ENCODE measurements at regions of chr7 and their contacts with region 1.

Region 1: GRCh38 chr7:140673063-140673773 is 473 bp downstream of the ADCK2 start:
- DNase-seq: peak in 1 of 2 donors; percentile 67
- H3K4me3 ChIP-seq: peak overlapping the region; percentile 95 to 99
- H3K27ac ChIP-seq: peak overlapping the region; percentile 83 to 87
- H3K4me1 ChIP-seq: peaks cover 0 to 15% of the 10 kb centered on the region in 2 donors
- H3K27me3 ChIP-seq: no peaks in the 10 kb centered on the region
- CTCF ChIP-seq: no peak

Region 2: GRCh38 chr7:140397784-140398750 is 275.2 kb before region 1 on chr7 and contains the start of gene SLC37A3:
- intact Hi-C with region 1: loop called (anchors 5 kb)
- DNase-seq: peak; percentile 37 to 89
- H3K4me3 ChIP-seq: peak within 1 kb of the TSS; percentile 81
- H3K27ac ChIP-seq: peak within 1 kb of the TSS; percentile 76 to 83
- H3K4me1 ChIP-seq: peaks cover 0 to 3% of the 10 kb centered on the region in 2 donors
- H3K27me3 ChIP-seq: no peaks in the 10 kb centered on the region
- CTCF ChIP-seq: peak in 1 of 3 experiments; percentile 29
- total RNA-seq, gene SLC37A3: 15.0 TPM

Region 3: GRCh38 chr7:140696680-140697446 is 23.6 kb after region 1 on chr7 and contains the start of gene NDUFB2:
- intact Hi-C with region 1: loop called (anchors 1 kb)
- DNase-seq: peak in 1 of 2 donors; percentile 77
- H3K4me3 ChIP-seq: peak within 1 kb of the TSS; percentile 62 to 74
- H3K27ac ChIP-seq: peak within 1 kb of the TSS; percentile 80 to 89
- H3K4me1 ChIP-seq: peaks cover 0 to 13% of the 10 kb centered on the region in 2 donors
- H3K27me3 ChIP-seq: no peaks in the 10 kb centered on the region
- CTCF ChIP-seq: no peak
- total RNA-seq, gene NDUFB2: 35.9 TPM

Region 4: GRCh38 chr7:140726281-140726680 is 53.1 kb after region 1 on chr7:
- intact Hi-C with region 1: no loop called
- DNase-seq: no peak
- H3K4me3 ChIP-seq: no peak overlapping the region
- H3K27ac ChIP-seq: no peak overlapping the region
- H3K4me1 ChIP-seq: no peaks in the 10 kb centered on the region
- H3K27me3 ChIP-seq: no peaks in the 10 kb centered on the region
- CTCF ChIP-seq: no peak

Region 5: DNA sequence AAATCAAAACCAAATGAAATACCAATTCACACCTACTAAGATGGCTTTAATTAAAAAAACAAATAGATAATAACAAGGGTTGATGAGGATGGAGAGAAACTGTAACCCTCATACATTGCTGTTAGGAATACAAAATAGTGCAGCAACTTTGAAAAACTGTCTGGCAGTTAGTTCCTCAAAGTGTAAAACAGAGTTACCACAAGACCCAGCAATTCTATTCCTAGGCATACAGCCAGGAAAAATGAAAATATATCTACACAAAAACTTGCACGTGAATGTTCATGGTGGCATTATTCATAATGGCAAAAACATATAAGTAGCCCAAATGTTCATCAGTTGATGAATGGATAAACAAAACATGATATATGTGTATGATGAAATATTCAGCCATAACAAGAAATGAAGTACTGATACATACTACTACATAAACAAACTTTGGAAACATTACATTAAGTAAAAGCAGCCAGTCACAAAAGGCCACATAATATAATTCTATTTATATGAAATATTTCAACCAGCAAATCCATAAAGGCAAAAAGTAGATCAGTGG is 168.0 kb after region 1 on chr7:
- intact Hi-C with region 1: no loop called
- DNase-seq: no peak
- H3K4me3 ChIP-seq: no peak overlapping the region
- H3K27ac ChIP-seq: no peak overlapping the region
- H3K4me1 ChIP-seq: no peaks in the 10 kb centered on the region
- H3K27me3 ChIP-seq: no peaks in the 10 kb centered on the region
- CTCF ChIP-seq: no peak

Measured in ascending aorta (tissue), 2 donors.